Caco-2 (cell line): ENCODE measurements at regions of chr1 and their contacts with region 1.

Region 1: DNA sequence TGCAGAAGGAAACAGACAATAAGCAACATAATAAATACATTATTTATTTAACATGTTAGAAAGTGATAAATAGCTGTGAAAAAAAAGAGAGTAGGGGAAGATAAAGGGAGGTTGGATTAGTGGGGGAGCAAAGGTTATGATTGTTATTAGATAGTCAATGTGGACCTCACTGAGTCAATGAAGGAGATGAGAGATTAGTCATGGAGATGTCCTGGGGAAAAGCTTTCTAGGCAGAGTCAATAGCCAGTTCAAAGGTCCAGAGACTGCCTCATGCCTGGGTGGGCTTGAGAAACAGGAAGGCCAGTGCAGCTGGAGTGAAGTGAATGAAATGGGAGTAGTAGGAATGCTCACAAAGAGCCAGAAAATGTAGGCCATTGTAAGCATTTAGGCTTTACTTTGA is 187.1 kb upstream of the CACYBP start:
- DNase-seq: peak; percentile 46 to 63
- H3K4me3 ChIP-seq: no peak overlapping the region
- H3K4me3 Mint-ChIP-seq: no peak overlapping the region
- H3K27ac Mint-ChIP-seq: no peak overlapping the region
- H3K4me1 ChIP-seq: peaks cover 10% of the 10 kb centered on the region; the same call in 1 of the 2 replicates
- H3K4me1 Mint-ChIP-seq: peaks cover 11% of the 10 kb centered on the region
- H3K27me3 ChIP-seq: no peaks in the 10 kb centered on the region
- H3K27me3 Mint-ChIP-seq: no peaks in the 10 kb centered on the region
- CTCF ChIP-seq: no peak

Region 2: DNA sequence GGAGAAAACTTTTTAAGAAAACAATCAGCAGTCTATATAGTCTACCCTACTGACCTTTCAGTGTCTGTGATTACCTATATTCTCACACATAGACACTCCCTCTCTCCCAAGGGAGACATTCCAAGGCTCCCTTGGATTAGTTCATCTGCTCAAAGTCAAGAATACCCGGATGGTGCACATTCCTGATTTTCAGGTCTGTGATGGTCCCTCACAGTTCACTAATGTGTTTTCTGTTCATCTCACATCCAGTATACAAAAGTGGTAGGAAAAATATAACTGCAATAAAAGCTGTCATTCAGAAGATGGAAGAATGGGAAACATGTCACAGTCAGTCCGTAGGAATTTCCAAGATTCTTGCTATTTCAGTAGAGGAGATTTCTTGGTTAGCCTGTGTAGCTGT is 37.0 kb before region 1 on chr1:
- CTCF ChIA-PET with region 1: no interaction called
- POLR2A ChIA-PET with region 1: no interaction called
- intact Hi-C with region 1: loop called (anchors 5 kb)
- DNase-seq: no peak
- H3K4me3 ChIP-seq: no peak overlapping the region
- H3K4me3 Mint-ChIP-seq: no peak overlapping the region
- H3K27ac Mint-ChIP-seq: no peak overlapping the region
- H3K4me1 ChIP-seq: no peaks in the 10 kb centered on the region
- H3K4me1 Mint-ChIP-seq: no peaks in the 10 kb centered on the region
- H3K27me3 ChIP-seq: no peaks in the 10 kb centered on the region
- H3K27me3 Mint-ChIP-seq: no peaks in the 10 kb centered on the region
- CTCF ChIP-seq: no peak